ENCODE measurements at regions of chr7 and their contacts with region 1.

Region 1: GRCh38 chr7:87152107-87152844 is at the start of gene DMTF1:
- H3K4me3 ChIP-seq: peak within 1 kb of the TSS; percentile 94
- H3K27ac ChIP-seq: peak within 1 kb of the TSS; percentile 100
- H3K4me1 ChIP-seq: peaks cover 7% of the 10 kb centered on the region; the same call in 1 of the 2 replicates
- CTCF ChIP-seq: no peak

Region 2: DNA sequence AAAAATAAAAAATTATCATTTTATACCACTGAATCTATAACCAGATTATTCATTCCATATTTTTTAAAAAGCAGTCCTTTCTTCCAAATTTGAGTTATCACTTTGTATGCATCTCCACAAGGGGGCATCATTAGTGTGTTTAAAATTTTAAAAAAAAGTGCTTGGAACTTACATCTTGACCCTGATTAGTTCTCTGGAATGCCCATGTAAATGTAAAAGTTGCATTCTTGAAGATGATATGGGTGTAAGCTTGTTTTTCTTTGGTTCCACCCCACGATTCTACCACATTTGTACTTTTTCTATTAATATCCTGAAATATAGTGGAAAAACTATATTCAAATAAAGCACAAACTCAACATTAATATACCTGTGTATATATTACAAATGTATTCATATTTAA is 237.7 kb before region 1 on chr7:
- CTCF ChIA-PET with region 1: interaction called, 24 read pairs
- POLR2A ChIA-PET with region 1: no interaction called
- H3K4me3 ChIP-seq: no peak overlapping the region
- H3K27ac ChIP-seq: no peak overlapping the region
- H3K4me1 ChIP-seq: no peaks in the 10 kb centered on the region; the same call in 1 of the 2 replicates
- CTCF ChIP-seq: no peak

Region 3: GRCh38 chr7:86926732-86927131 is 225.5 kb before region 1 on chr7:
- CTCF ChIA-PET with region 1: interaction called, 25 read pairs
- POLR2A ChIA-PET with region 1: interaction called, 3 read pairs
- H3K4me3 ChIP-seq: no peak overlapping the region
- H3K27ac ChIP-seq: no peak overlapping the region
- H3K4me1 ChIP-seq: no peaks in the 10 kb centered on the region
- CTCF ChIP-seq: 0 out of 2 replicates have a peak, but pooled peaks have one; percentile 10

Region 4: GRCh38 chr7:86942081-86942480 is 210.2 kb before region 1 on chr7:
- CTCF ChIA-PET with region 1: interaction called, 22 read pairs
- POLR2A ChIA-PET with region 1: no interaction called
- H3K4me3 ChIP-seq: no peak overlapping the region
- H3K27ac ChIP-seq: no peak overlapping the region
- H3K4me1 ChIP-seq: peaks cover 5% of the 10 kb centered on the region; the same call in 1 of the 2 replicates
- CTCF ChIP-seq: no peak

Region 5: DNA sequence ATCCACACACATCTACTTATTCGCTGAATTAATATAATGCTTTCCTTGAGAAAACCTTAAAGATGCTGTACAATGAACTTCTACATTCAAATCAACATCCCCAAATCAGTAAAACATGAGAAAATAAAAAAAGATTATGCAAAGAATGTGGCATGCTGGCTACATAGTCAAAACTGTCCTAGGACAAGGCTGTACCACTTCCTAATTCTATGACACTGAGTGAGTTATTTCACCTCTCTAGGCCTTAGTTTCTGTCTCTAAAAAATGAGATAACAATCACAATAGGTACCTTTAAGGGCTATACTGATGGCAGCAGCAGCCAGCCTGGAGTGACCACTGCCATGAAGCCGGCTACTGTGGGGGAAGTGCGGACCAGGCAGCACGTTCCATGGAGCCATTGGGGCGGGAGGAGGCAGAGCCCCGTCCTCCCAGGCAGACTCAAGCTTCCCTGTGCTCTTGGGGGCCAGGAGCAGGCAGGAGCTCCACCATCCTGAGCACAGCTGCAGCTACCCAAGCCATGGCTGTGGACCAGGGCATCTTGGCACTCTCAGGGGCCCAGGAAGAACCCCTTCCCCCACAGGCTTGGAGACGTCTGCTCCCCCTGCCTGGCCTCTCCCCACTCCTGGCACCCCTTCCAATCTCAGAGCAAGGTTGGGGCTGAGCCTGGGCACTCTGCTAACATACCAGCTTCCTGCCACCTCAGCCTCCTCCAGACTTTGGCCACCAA is 203.1 kb before region 1 on chr7:
- CTCF ChIA-PET with region 1: interaction called, 10 read pairs
- POLR2A ChIA-PET with region 1: interaction called, 3 read pairs
- H3K4me3 ChIP-seq: no peak overlapping the region
- H3K27ac ChIP-seq: no peak overlapping the region
- H3K4me1 ChIP-seq: no peaks in the 10 kb centered on the region
- CTCF ChIP-seq: no peak

Region 6: DNA sequence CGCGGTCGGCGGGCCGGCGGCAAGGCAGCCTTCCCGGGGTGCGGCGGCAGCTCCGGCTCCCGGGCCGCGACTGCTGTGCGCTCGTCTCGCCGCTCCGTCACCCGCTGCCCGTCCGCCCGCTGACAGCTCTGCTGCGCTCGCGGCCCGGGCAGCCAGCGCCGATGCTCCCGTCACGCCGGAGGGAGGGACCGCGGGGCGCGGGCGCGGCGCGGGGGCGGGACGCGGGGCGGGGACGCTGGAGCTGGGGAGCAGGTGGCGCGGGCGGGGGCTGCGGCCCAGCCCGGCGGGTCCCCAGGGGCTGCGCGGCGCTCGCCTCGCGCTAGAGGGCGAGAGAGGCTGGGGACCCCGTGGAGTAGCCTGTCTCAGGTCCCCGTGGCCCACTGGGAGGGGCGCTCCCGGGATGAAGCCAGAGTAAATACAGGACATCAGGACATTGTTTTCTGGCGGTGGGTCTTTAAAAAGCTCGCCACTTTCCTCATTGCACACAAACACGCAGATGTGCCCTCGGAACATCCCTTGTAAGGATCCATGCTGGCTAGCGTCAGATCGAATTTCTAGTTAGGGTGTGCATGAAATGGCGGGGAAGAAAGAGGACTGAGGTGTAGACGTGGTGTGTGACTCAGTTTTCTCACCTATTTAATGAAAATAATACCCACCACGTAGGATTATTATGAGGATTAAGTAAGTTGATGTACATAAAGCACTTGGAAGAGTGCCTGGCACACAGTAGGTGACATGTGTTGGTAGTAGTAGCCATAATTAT is 92.6 kb before region 1 on chr7 and contains the start of gene ELAPOR2:
- CTCF ChIA-PET with region 1: interaction called, 14 read pairs
- POLR2A ChIA-PET with region 1: interaction called, 16 read pairs
- H3K4me3 ChIP-seq: peak within 1 kb of the TSS; percentile 64
- H3K27ac ChIP-seq: peak within 1 kb of the TSS; percentile 30; the same call in 1 of the 2 replicates
- H3K4me1 ChIP-seq: no peaks in the 10 kb centered on the region; the same call in 1 of the 2 replicates
- CTCF ChIP-seq: peak; percentile 30; the same call in 1 of the 2 replicates

Region 7: DNA sequence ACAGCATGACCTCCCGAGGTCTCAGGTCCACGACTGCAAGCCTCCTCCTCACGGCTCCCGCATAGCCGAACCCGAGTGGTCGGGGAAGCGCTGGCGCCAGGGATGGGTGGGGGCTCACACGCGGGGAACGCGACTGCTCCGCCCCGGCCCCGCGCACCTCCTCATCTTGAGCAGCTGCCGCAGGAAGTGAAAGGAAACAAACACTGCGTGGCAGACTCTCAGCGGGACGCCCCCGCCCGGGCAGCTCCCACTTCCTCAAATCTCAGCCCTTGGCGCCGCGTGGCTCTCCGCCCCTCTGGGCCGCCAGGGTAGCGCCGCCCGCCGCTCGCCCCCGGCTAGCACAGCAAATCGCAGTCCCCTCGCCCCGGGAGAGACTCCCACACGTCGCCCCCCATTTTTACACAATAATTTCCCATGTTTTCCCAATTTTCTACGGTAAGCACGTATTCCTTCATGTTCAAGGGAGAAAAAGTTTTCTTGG is 67.3 kb after region 1 on chr7 and contains the start of gene TMEM243:
- CTCF ChIA-PET with region 1: no interaction called
- POLR2A ChIA-PET with region 1: interaction called, 33 read pairs
- H3K4me3 ChIP-seq: peak within 1 kb of the TSS; percentile 92
- H3K27ac ChIP-seq: peak within 1 kb of the TSS; percentile 64; the same call in 1 of the 2 replicates
- H3K4me1 ChIP-seq: no peaks in the 10 kb centered on the region
- CTCF ChIP-seq: peak; percentile 34; the same call in 1 of the 2 replicates

Measured in HEK293 (cell line).